Activated T-helper 2 cell treated with anti-CD3 and anti-CD28 coated beads, Interferon-gamma antibody, Interleukin-2, Interleukin-4, amounts not matched to agents 10 μg/mL and 5 μg/mL and 100 μg/mL, durations not matched to agents 14 hours and 24 hours and 36 hours (primary cell): ENCODE measurements at regions of chr7 and their contacts with region 1.

Region 1: GRCh38 chr7:119720541-119720940 is 552.4 kb upstream of the KCND2 start:
- DNase-seq: no peak
- H3K4me3 Mint-ChIP-seq: no peak overlapping the region
- H3K27ac Mint-ChIP-seq: no peak overlapping the region
- H3K4me1 Mint-ChIP-seq: no peaks in the 10 kb centered on the region
- H3K27me3 Mint-ChIP-seq: no peaks in the 10 kb centered on the region

Region 2: DNA sequence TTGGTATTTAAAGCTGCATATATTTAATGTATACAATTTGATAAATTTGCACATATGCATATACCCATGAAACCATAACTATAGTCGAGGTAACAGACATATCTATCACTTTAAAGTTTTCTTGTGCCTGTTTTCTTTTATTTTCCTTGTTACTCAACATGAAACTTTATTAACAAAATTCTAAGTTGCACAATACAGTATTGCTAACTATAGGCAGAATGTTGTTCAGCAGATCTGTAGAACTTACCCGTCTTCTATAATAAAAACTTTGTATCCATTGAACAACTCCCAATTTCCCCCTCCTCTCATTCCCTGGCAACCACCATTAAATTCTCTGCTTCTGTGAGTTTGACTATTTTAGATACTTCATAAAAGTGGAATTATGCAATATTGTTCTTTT is 147.8 kb after region 1 on chr7:
- intact Hi-C with region 1: no loop called
- DNase-seq: no peak
- H3K4me3 Mint-ChIP-seq: no peak overlapping the region
- H3K27ac Mint-ChIP-seq: no peak overlapping the region
- H3K4me1 Mint-ChIP-seq: no peaks in the 10 kb centered on the region
- H3K27me3 Mint-ChIP-seq: no peaks in the 10 kb centered on the region

Region 3: GRCh38 chr7:120138497-120138896 is 418.0 kb after region 1 on chr7:
- intact Hi-C with region 1: loop called (anchors 10 kb)
- DNase-seq: no peak
- H3K4me3 Mint-ChIP-seq: no peak overlapping the region
- H3K27ac Mint-ChIP-seq: no peak overlapping the region
- H3K4me1 Mint-ChIP-seq: no peaks in the 10 kb centered on the region
- H3K27me3 Mint-ChIP-seq: no peaks in the 10 kb centered on the region